Common myeloid progenitor, CD34-positive (primary cell): ENCODE measurements at regions of chr16 and their contacts with region 1.

Region 1: GRCh38 chr16:24010440-24011089 is 174.8 kb downstream of the PRKCB start:
- DNase-seq: peak; percentile 93 to 96 (median 94)
- H3K4me3 ChIP-seq: no peak overlapping the region
- H3K27ac ChIP-seq: no peak overlapping the region
- H3K4me1 ChIP-seq: peaks cover 20 to 68% (median 50%) of the 10 kb centered on the region in 4 experiments
- H3K27me3 ChIP-seq: no peaks in the 10 kb centered on the region

Region 2: GRCh38 chr16:23959072-23959751 is 51.4 kb before region 1 on chr16:
- CTCF ChIA-PET with region 1: interaction called, 17 read pairs
- POLR2A ChIA-PET with region 1: interaction called, 5 read pairs
- DNase-seq: peak in 2 of 3 donors; percentile 77 to 84
- H3K4me3 ChIP-seq: peak overlapping the region in 4 of 7 experiments; percentile 16 to 59 (median 40)
- H3K27ac ChIP-seq: peak overlapping the region in 1 of 2 experiments; percentile 46
- H3K4me1 ChIP-seq: peaks cover 28 to 48% (median 38%) of the 10 kb centered on the region in 4 experiments
- H3K27me3 ChIP-seq: no peaks in the 10 kb centered on the region

Region 3: DNA sequence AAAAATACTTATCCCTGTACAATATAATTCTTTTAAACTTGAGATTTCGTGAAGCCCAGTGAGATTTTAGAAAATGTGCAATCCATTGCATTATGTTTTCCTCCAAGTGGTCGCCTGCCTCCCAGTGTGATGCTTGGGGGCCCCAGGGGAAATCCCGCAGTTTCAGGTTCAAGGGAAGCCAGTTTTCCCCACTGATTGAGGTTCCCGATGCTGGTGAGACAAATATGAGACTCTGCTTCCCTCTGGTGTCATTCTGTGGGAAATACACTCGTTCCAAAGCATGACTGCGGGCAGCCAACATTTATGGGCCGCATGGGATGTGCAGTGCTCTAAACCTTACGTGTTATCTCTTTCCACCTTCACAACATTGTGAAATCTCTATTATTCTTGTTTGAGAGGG is 26.0 kb after region 1 on chr16:
- CTCF ChIA-PET with region 1: interaction called, 68 read pairs
- POLR2A ChIA-PET with region 1: no interaction called
- DNase-seq: peak; percentile 39 to 56 (median 52)
- H3K4me3 ChIP-seq: no peak overlapping the region
- H3K27ac ChIP-seq: no peak overlapping the region
- H3K4me1 ChIP-seq: peaks cover 4 to 31% (median 25%) of the 10 kb centered on the region in 4 experiments
- H3K27me3 ChIP-seq: no peaks in the 10 kb centered on the region